ENCODE measurements at regions of chr7 and their contacts with region 1.

Region 1: DNA sequence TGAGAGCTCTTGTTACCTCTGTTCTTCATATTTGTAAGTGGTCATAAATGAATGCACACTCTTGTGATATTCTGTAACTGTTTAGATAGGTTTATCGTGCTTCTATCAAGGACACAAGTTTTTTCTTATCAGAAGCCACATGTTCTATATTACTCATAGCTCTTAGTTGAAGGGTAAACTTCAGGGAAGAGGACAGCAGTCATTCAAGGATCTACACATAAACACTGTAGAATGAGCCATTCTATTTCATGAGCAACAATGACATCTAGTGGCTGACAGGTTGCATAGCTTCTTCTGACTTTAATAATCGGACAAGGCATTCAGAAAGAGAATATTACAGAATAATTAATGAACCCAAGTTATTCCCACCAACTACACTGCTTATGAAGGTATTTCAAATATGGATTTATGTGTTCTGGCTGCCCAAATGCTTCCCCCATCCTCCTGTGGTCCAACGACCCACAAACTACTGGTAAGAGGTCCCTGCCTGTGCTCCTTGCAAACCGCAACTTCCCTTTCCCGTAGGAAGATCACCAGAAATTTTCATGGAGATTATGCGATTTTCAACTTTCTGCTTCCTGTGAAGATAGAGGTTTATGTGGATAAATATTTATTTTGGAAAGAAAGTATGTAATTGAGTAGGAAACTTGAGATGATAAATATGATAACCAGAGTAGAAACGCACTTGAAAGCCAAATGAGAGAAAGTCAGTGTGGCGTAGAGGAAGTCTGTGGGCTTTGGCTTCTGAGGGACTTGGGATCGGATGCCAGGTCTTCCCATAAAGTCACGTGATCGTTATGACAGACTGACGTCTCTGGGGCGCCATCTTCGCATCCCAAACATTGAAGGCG is 16.8 kb upstream of the ABCB5 start:
- DNase-seq: peak; percentile 74 to 86 (median 85)
- H3K4me3 ChIP-seq: peak overlapping the region in 5 of 7 experiments; percentile 11 to 68 (median 37)
- H3K27ac ChIP-seq: no peak overlapping the region
- H3K4me1 ChIP-seq: peaks cover 2 to 26% (median 16%) of the 10 kb centered on the region in 4 experiments
- H3K27me3 ChIP-seq: no peaks in the 10 kb centered on the region

Region 2: GRCh38 chr7:19708397-19709248 is 890.1 kb before region 1 on chr7 and contains the start of gene POLR1F:
- CTCF ChIA-PET with region 1: interaction called, 13 read pairs
- POLR2A ChIA-PET with region 1: no interaction called
- DNase-seq: peak; percentile 95 to 98 (median 97)
- H3K4me3 ChIP-seq: peak within 1 kb of the TSS; percentile 93 to 100 (median 95)
- H3K27ac ChIP-seq: peak within 1 kb of the TSS; percentile 86 to 93
- H3K4me1 ChIP-seq: peaks cover 12 to 33% (median 23%) of the 10 kb centered on the region in 4 experiments
- H3K27me3 ChIP-seq: no peaks in the 10 kb centered on the region

Region 3: GRCh38 chr7:19713676-19714075 is 885.0 kb before region 1 on chr7:
- CTCF ChIA-PET with region 1: interaction called, 13 read pairs
- POLR2A ChIA-PET with region 1: no interaction called
- DNase-seq: peak; percentile 73 to 85 (median 80)
- H3K4me3 ChIP-seq: no peak overlapping the region
- H3K27ac ChIP-seq: no peak overlapping the region
- H3K4me1 ChIP-seq: peaks cover 0 to 7% (median 4%) of the 10 kb centered on the region in 4 experiments
- H3K27me3 ChIP-seq: no peaks in the 10 kb centered on the region

Region 4: DNA sequence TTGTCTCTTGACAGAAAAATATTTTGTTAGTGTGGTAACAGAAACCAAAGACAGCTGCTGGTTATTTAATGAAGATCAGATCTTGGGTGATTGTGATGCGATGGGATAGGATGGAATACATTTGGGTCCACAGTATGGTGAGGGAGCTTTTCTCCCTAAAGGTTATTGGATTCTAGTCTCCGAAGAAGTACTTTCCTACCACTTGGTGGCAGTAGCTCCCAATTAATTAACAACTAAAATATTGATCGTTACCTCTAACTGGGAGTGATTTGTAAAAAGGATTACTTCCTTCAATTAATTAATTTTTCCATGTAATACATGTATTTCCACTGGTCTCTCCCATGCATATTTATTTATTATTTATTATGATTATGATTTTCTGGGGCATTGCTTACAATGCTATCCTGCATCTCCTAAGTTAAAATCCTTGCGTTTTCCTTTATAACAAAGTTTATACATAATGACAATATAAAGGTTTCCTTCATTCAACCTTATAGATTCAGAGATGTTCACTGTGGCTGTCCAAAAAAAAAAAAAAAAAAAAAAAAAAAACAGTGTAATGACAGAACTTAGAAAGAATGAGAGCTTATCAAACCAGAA is 850.8 kb before region 1 on chr7:
- CTCF ChIA-PET with region 1: interaction called, 28 read pairs
- POLR2A ChIA-PET with region 1: no interaction called
- DNase-seq: peak; percentile 36 to 49 (median 38)
- H3K4me3 ChIP-seq: no peak overlapping the region
- H3K27ac ChIP-seq: no peak overlapping the region
- H3K4me1 ChIP-seq: no peaks in the 10 kb centered on the region
- H3K27me3 ChIP-seq: no peaks in the 10 kb centered on the region

Region 5: GRCh38 chr7:20310963-20311742 is 287.5 kb before region 1 on chr7:
- CTCF ChIA-PET with region 1: interaction called, 10 read pairs
- POLR2A ChIA-PET with region 1: interaction called, 3 read pairs
- DNase-seq: peak; percentile 63 to 83 (median 82)
- H3K4me3 ChIP-seq: no peak overlapping the region
- H3K27ac ChIP-seq: no peak overlapping the region
- H3K4me1 ChIP-seq: peaks cover 3 to 17% (median 5%) of the 10 kb centered on the region in 4 experiments
- H3K27me3 ChIP-seq: no peaks in the 10 kb centered on the region

Measured in common myeloid progenitor, CD34-positive (primary cell).